B cell (primary cell): ENCODE measurements at regions of chr7 and their contacts with region 1.

Region 1: DNA sequence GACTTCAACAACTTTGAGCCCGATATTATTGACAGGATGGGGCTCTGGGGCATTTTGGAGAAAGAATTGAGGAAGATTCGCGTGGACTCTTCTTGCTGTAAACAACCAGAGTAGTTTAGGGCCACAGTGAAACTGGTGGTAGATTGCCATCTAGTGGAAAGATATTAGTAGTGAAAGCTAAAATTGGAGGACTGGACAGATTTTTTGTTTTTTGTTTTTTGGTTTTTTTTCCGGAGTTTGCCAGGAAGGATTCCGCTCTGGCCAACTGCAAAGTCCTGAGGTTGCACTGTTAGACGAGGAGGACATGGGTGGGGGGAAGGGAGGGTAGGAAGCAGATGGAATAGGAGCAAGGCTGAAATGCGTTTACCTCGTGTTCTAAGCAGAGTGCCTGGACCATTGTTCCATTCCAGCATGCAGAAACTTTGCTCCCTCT is 11.7 kb downstream of the NOBOX start:
- DNase-seq: peak; percentile 74
- ATAC-seq: peak; percentile 64
- H3K4me3 ChIP-seq: no peak overlapping the region
- H3K4me3 Mint-ChIP-seq: peak overlapping the region; percentile 4
- H3K27ac ChIP-seq: no peak overlapping the region
- H3K27ac Mint-ChIP-seq: no peak overlapping the region
- H3K4me1 ChIP-seq: peaks cover 7 to 10% of the 10 kb centered on the region in 2 donors
- H3K4me1 Mint-ChIP-seq: peaks cover 4% of the 10 kb centered on the region
- H3K27me3 ChIP-seq: no peaks in the 10 kb centered on the region
- H3K27me3 Mint-ChIP-seq: peaks cover 8% of the 10 kb centered on the region
- CTCF ChIP-seq: peak; percentile 77

Region 2: DNA sequence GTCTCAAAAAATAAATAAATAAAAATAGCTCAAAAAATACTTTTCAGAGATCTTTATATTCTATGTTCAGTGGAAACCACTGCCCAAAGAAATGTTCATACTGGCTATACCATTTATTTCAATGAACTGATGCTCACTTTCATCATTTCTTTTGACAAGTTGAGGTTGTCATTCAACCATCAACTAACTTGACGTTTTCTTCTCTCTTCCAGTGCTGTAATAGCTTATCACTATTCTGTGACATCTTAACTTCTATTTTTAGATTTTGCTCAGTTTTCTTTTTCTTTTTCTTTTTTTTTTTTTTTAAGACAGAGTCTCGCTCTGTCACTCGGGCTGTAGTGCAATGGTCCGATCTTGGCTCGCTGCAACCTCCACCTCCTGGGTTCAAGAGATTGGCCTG is 217.2 kb before region 1 on chr7:
- CTCF ChIA-PET with region 1: interaction called, 14 read pairs
- POLR2A ChIA-PET with region 1: no interaction called
- intact Hi-C with region 1: no loop called
- DNase-seq: no peak
- ATAC-seq: no peak
- H3K4me3 ChIP-seq: no peak overlapping the region
- H3K4me3 Mint-ChIP-seq: no peak overlapping the region
- H3K27ac ChIP-seq: no peak overlapping the region
- H3K27ac Mint-ChIP-seq: no peak overlapping the region
- H3K4me1 ChIP-seq: no peaks in the 10 kb centered on the region
- H3K4me1 Mint-ChIP-seq: peaks cover 3% of the 10 kb centered on the region
- H3K27me3 ChIP-seq: peaks cover 0 to 4% (median 0%) of the 10 kb centered on the region in 4 experiments
- H3K27me3 Mint-ChIP-seq: peaks cover 8% of the 10 kb centered on the region
- CTCF ChIP-seq: no peak